Ovary (tissue), 10 donors: ENCODE measurements at regions of chr1 and their contacts with region 1.

Region 1: GRCh38 chr1:85307987-85308832 is 31.8 kb upstream of the BCL10 start:
- DNase-seq: peak; percentile 79 to 92 (median 89)
- H3K4me3 ChIP-seq: no peak overlapping the region
- H3K27ac ChIP-seq: no peak overlapping the region
- H3K4me1 ChIP-seq: no peaks in the 10 kb centered on the region
- H3K27me3 ChIP-seq: no peaks in the 10 kb centered on the region
- CTCF ChIP-seq: peak; percentile 74 to 97 (median 92)
- EP300 ChIP-seq: no peak
- POLR2A ChIP-seq: no peak

Region 2: GRCh38 chr1:85048296-85049064 is 259.7 kb before region 1 on chr1 and contains the start of gene MCOLN3:
- intact Hi-C with region 1: no loop called
- DNase-seq: peak; percentile 23 to 58 (median 30)
- H3K4me3 ChIP-seq: peak within 1 kb of the TSS; percentile 37
- H3K27ac ChIP-seq: no peak within 1 kb of the TSS
- H3K4me1 ChIP-seq: peaks cover 4% of the 10 kb centered on the region
- H3K27me3 ChIP-seq: no peaks in the 10 kb centered on the region
- CTCF ChIP-seq: no peak
- EP300 ChIP-seq: no peak
- POLR2A ChIP-seq: no peak
- total RNA-seq, gene MCOLN3: 2.0 to 8.3 (median 3.7) TPM

Region 3: DNA sequence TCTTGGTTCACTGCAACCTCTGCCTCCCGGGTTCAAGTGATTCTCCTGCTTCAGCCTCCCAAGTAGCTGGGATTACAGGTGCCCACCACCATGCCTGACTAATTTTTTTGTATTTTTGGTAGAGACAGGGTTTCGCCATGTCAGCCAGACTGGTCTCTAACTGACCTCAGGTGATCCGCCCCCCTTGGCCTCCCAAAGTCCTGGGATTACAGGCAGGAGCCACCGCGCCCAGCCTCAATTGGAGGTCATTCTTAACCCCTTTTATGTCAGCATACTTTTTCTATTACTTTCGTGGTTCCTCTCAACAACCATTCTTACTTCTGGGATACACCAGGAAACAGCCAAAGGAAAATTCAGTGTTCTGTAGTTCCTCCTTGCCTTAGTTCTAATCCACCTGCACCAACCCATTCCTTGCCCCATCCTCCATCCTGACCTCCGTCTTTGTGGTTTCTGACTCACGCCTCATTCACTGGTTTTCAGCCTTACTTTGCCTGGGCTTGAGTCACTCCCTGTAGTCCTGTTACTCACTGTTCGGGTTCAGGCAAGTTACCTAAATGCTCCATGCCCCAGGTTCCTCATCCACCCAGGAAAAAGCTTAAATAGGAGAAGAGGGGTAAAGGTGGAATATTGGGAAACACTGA is 18.9 kb before region 1 on chr1:
- intact Hi-C with region 1: no loop called
- DNase-seq: no peak
- H3K4me3 ChIP-seq: no peak overlapping the region
- H3K27ac ChIP-seq: no peak overlapping the region
- H3K4me1 ChIP-seq: no peaks in the 10 kb centered on the region
- H3K27me3 ChIP-seq: no peaks in the 10 kb centered on the region
- CTCF ChIP-seq: no peak
- EP300 ChIP-seq: no peak
- POLR2A ChIP-seq: no peak

Region 4: GRCh38 chr1:85502625-85503083 is 194.4 kb after region 1 on chr1:
- intact Hi-C with region 1: loop called in 1 of 4 experiments (anchors 10 kb)
- DNase-seq: peak in 2 of 5 donors; percentile 26 to 48
- H3K4me3 ChIP-seq: no peak overlapping the region
- H3K27ac ChIP-seq: no peak overlapping the region
- H3K4me1 ChIP-seq: no peaks in the 10 kb centered on the region
- H3K27me3 ChIP-seq: no peaks in the 10 kb centered on the region
- CTCF ChIP-seq: peak in 2 of 3 donors; percentile 17 to 20
- EP300 ChIP-seq: no peak
- POLR2A ChIP-seq: no peak

Region 5: GRCh38 chr1:85580872-85581801 is 272.9 kb after region 1 on chr1:
- intact Hi-C with region 1: loop called in 1 of 4 experiments (anchors 10 kb)
- DNase-seq: peak; percentile 50 to 81 (median 71)
- H3K4me3 ChIP-seq: peak overlapping the region; percentile 87
- H3K27ac ChIP-seq: peak overlapping the region; percentile 65 to 90
- H3K4me1 ChIP-seq: peaks cover 5% of the 10 kb centered on the region
- H3K27me3 ChIP-seq: no peaks in the 10 kb centered on the region
- CTCF ChIP-seq: peak; percentile 39 to 79 (median 47)
- EP300 ChIP-seq: no peak
- POLR2A ChIP-seq: no peak

Region 6: GRCh38 chr1:85692730-85693314 is 384.6 kb after region 1 on chr1:
- intact Hi-C with region 1: loop called (anchors 5 to 10 kb)
- DNase-seq: no peak
- H3K4me3 ChIP-seq: no peak overlapping the region
- H3K27ac ChIP-seq: no peak overlapping the region
- H3K4me1 ChIP-seq: no peaks in the 10 kb centered on the region
- H3K27me3 ChIP-seq: no peaks in the 10 kb centered on the region
- CTCF ChIP-seq: peak in 1 of 3 donors; percentile 11
- EP300 ChIP-seq: no peak
- POLR2A ChIP-seq: no peak